MCF 10A (cell line): ENCODE measurements at regions of chr4 and their contacts with region 1.

Region 1: GRCh38 chr4:27318743-27319142 is 458.1 kb downstream of the STIM2 start:
- DNase-seq: peak; percentile 40
- H3K4me3 Mint-ChIP-seq: no peak overlapping the region
- H3K27ac Mint-ChIP-seq: no peak overlapping the region
- H3K4me1 Mint-ChIP-seq: no peaks in the 10 kb centered on the region
- H3K27me3 Mint-ChIP-seq: no peaks in the 10 kb centered on the region
- CTCF ChIP-seq: peak; percentile 35

Region 2: GRCh38 chr4:27161191-27161590 is 157.6 kb before region 1 on chr4:
- CTCF ChIA-PET with region 1: no interaction called
- POLR2A ChIA-PET with region 1: no interaction called
- intact Hi-C with region 1: loop called (anchors 5 kb)
- DNase-seq: no peak
- H3K4me3 Mint-ChIP-seq: no peak overlapping the region
- H3K27ac Mint-ChIP-seq: no peak overlapping the region
- H3K4me1 Mint-ChIP-seq: peaks cover 6% of the 10 kb centered on the region
- H3K27me3 Mint-ChIP-seq: no peaks in the 10 kb centered on the region
- CTCF ChIP-seq: no peak

Region 3: DNA sequence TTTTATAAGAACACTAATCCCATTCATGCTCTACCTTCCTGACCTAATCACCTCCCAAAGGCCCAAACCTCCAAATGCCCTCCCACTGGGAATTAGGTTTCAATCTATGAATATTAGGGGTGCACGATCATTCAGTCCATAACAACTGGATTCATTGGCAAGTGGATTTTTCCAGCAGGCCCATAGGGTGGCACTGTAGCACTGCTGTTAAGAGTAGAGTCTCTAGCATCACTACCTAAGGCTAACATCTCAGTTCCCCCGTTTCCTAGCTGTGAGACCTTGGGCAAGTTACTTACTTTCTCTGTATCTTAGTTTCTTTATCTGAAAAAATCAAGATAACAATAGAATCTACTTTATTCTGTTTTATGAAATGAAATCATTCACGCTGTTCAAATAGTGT is 142.3 kb before region 1 on chr4:
- CTCF ChIA-PET with region 1: interaction called, 3 read pairs
- POLR2A ChIA-PET with region 1: no interaction called
- intact Hi-C with region 1: loop called (anchors 1 kb)
- DNase-seq: peak; percentile 60
- H3K4me3 Mint-ChIP-seq: no peak overlapping the region
- H3K27ac Mint-ChIP-seq: no peak overlapping the region
- H3K4me1 Mint-ChIP-seq: peaks cover 5% of the 10 kb centered on the region
- H3K27me3 Mint-ChIP-seq: no peaks in the 10 kb centered on the region
- CTCF ChIP-seq: peak; percentile 69

Region 4: GRCh38 chr4:27233531-27233930 is 85.2 kb before region 1 on chr4:
- CTCF ChIA-PET with region 1: no interaction called
- POLR2A ChIA-PET with region 1: no interaction called
- intact Hi-C with region 1: no loop called
- DNase-seq: no peak
- H3K4me3 Mint-ChIP-seq: no peak overlapping the region
- H3K27ac Mint-ChIP-seq: no peak overlapping the region
- H3K4me1 Mint-ChIP-seq: no peaks in the 10 kb centered on the region
- H3K27me3 Mint-ChIP-seq: no peaks in the 10 kb centered on the region
- CTCF ChIP-seq: no peak

Region 5: DNA sequence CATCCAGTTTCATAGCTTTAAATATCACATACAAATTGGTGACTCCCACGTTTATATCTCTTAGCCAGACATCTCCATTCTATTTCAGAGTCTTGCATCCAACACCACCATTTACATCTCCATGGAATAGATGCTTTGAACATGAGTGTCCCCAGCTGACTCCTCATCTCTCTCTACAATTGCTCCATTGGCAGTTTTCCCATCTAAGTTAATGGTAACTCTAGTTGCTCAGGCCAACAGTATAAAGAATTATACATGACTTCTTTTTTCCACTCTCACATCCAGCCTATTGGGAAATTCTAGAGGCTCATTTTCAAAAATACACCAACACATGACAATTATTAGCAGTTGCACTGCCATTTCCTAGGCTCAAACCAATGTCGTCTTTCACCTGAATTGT is 69.9 kb before region 1 on chr4:
- CTCF ChIA-PET with region 1: no interaction called
- POLR2A ChIA-PET with region 1: no interaction called
- intact Hi-C with region 1: no loop called
- DNase-seq: no peak
- H3K4me3 Mint-ChIP-seq: no peak overlapping the region
- H3K27ac Mint-ChIP-seq: no peak overlapping the region
- H3K4me1 Mint-ChIP-seq: no peaks in the 10 kb centered on the region
- H3K27me3 Mint-ChIP-seq: no peaks in the 10 kb centered on the region
- CTCF ChIP-seq: no peak